Posterior vena cava (tissue), 2 donors: ENCODE measurements at regions of chr18 and their contacts with region 1.

Region 1: GRCh38 chr18:43869451-43870008 is 592.2 kb upstream of the SYT4 start:
- DNase-seq: no peak

Region 2: DNA sequence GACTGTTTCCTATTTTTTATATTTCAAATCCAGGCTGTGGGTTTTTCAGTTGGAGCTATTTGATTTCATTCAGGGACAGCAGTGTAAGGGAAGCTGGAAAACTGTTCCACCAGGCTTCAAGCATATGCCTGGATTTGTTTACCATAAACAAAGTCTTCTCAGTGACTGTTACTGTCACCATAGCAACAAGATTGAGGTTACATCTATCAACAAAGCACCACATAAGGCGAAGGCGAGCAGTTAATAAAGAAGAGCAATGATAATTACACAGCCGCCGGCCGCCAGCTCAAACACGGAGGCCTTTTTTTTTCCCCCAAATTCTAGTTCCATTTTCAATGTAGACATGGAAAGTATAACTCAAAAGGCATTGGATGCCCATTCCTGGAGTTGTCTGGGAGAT is 38.6 kb before region 1 on chr18:
- intact Hi-C with region 1: loop called in 1 of 2 experiments (anchors 2 kb)
- DNase-seq: no peak